Vagina (tissue), 2 donors: ENCODE measurements at regions of chr14 and their contacts with region 1.

Region 1: DNA sequence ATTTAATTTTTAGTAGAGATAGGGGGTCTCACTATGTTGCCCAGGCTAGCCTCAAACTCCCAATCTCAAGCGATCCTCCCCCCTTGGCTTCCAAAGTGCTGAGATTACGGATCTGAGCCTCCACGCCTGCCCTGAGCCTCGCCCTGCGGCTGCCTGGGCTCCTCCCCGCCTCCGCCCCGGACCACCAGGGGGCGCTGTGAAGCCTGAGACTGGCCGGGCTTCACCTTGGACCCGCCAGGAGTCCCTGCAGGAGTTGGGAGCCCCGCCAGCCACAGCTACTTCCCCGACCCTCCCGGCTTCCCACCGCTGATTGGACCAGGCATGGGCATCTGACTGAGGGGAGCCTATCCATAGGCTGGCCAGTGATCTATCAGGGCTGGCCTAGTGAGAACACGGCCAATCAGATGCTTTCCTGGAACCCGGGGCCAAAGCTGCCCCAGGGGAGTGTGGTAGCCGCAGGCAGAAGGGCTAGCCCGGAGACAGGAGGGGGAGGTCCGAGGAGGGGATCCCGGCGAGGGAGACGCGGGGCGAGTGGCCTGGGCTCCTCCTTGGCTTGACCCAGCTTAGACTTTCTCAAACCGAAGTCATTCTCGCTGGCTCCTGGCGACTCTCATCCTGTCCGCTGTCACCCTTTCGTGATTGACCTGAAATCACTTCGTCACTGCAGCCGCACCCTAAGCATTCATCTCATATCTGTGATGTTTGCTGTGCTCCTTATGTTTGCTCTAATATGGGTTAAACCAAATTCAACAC is 15.1 kb upstream of the ANKRD9 start:
- DNase-seq: peak in 1 of 2 donors; percentile 99
- H3K4me3 ChIP-seq: peak overlapping the region; percentile 56 to 59
- H3K27ac ChIP-seq: peak overlapping the region; percentile 77
- H3K4me1 ChIP-seq: peaks cover 24% of the 10 kb centered on the region
- H3K27me3 ChIP-seq: no peaks in the 10 kb centered on the region
- CTCF ChIP-seq: peak; percentile 90 to 99 (median 99)
- POLR2A ChIP-seq: no peak

Region 2: DNA sequence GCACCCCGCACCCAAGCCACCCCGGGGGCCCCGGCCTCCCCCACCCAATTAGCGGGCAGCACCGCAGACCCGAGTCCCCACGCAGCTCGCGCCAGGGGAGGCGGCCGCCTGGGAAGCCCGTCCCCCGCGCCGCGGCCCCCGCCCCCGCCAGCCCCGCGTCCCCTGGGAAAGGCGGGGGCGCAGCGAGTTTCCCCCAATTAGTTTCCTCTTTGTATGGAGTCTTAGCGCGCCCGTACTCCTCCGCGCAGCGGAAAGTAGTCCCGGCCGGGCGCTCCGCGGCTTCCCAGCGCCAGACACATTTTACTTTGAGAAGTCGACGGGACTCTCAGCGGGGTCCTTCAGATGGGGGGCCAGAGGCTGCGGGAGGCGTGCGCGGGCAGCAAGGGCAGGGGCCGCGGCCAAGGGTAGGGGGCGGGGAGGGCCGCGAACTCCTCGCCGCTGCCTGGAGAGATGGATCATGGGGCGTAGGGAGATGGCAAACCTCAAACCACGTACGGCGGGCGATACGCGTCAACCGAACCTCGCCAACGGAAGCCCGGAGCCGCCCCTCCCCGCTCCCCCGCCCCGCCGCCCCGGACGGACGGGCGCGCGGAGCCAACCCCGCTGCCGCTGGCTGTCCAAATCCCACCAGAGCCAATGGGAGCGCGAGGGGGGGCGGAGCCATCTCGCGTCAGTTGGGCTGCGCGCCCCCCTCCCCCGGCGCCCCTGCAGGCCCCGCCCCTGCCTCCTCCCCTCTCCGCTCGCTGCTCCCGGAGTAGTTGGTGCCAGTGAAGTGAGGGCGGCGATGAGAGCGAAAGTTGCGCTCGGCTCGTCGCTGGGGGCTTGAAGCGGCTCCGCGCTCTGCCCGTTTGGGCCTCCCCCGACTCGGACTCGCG is 67.5 kb after region 1 on chr14 and contains the start of gene RCOR1:
- intact Hi-C with region 1: loop called (anchors 2 kb)
- DNase-seq: peak; percentile 97
- H3K4me3 ChIP-seq: peak within 1 kb of the TSS; percentile 72 to 95
- H3K27ac ChIP-seq: peak within 1 kb of the TSS; percentile 98
- H3K4me1 ChIP-seq: peaks cover 28% of the 10 kb centered on the region
- H3K27me3 ChIP-seq: no peaks in the 10 kb centered on the region
- CTCF ChIP-seq: no peak
- POLR2A ChIP-seq: peak in 1 of 2 donors; percentile 86
- total RNA-seq, gene RCOR1: 24.3 TPM